A673 (cell line): ENCODE measurements at regions of chr19 and their contacts with region 1.

Region 1: DNA sequence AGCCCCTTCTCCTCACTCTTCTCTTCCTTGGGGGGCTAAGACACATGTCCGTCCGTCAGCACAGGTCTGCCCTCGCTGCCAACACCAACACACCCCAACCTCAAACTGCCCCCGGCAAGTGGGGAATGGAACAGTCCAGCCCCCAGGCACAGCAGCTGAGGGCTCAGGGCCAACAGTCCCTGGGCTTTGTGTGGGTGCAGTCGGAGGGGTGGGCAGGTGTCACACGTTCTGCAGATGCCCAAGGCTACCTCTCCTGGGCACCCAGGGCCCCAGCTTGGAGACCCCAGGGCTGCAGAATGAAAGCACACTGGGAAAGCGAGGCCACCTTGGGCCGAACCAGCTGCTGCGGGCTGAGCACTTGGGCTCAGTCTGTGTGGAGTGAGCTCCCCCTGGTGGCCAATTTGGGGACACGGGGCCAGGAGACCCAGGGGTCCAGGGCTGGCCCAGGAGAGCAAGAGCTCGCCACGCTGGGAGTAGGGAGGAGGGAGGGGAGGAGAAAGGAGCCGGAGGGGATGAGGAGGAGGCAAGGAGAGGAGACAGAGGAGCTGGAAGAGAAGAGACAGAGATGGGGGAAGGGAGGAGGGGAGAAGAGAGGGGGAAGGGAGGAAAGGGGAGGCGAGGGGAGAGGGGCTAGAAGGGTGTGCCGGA is 14.0 kb upstream of the ATP8B3 start:
- DNase-seq: peak; percentile 88
- H3K4me3 ChIP-seq: no peak overlapping the region
- H3K27ac ChIP-seq: no peak overlapping the region
- H3K4me1 ChIP-seq: no peaks in the 10 kb centered on the region
- H3K27me3 ChIP-seq: no peaks in the 10 kb centered on the region
- CTCF ChIP-seq: peak; percentile 98

Region 2: GRCh38 chr19:1300744-1301490 is 525.1 kb before region 1 on chr19:
- CTCF ChIA-PET with region 1: no interaction called
- POLR2A ChIA-PET with region 1: interaction called, 10 read pairs
- intact Hi-C with region 1: no loop called
- DNase-seq: no peak
- H3K4me3 ChIP-seq: no peak overlapping the region
- H3K27ac ChIP-seq: no peak overlapping the region
- H3K4me1 ChIP-seq: no peaks in the 10 kb centered on the region
- H3K27me3 ChIP-seq: no peaks in the 10 kb centered on the region
- CTCF ChIP-seq: no peak

Region 3: DNA sequence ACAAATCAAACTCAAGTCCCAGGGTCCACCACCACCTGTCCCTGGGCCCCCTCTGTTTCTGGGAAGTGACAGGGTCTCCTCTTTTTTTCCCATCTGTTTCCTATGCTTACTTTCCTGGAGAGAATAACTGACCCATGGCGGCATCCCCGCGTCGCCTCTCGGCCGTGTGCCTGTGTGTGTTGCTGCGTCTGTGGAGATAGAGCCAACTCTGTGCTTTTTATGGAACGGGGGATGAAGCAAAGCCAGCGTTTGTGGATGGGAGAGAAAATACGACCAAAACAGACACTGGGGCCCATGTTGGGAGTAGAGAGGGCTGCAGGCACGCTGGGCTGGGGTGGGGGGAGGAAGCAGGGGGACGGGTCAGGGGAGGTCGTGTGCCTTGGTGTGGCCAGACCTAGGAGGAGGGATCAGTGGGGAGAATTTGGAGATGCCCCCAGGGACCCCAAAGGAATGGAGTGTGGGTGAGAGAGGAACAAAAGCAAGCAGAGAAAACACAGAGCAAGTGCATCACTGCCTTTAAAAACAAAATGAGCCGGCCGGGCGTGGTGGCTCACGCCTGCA is 285.6 kb before region 1 on chr19:
- CTCF ChIA-PET with region 1: interaction called, 23 read pairs
- POLR2A ChIA-PET with region 1: no interaction called
- intact Hi-C with region 1: no loop called
- DNase-seq: no peak
- H3K4me3 ChIP-seq: no peak overlapping the region
- H3K27ac ChIP-seq: no peak overlapping the region
- H3K4me1 ChIP-seq: peaks cover 8% of the 10 kb centered on the region
- H3K27me3 ChIP-seq: no peaks in the 10 kb centered on the region
- CTCF ChIP-seq: no peak

Region 4: GRCh38 chr19:1646149-1646548 is 179.9 kb before region 1 on chr19:
- CTCF ChIA-PET with region 1: interaction called, 12 read pairs
- POLR2A ChIA-PET with region 1: no interaction called
- intact Hi-C with region 1: no loop called
- DNase-seq: no peak
- H3K4me3 ChIP-seq: no peak overlapping the region
- H3K27ac ChIP-seq: no peak overlapping the region
- H3K4me1 ChIP-seq: peaks cover 20% of the 10 kb centered on the region
- H3K27me3 ChIP-seq: no peaks in the 10 kb centered on the region
- CTCF ChIP-seq: no peak

Region 5: DNA sequence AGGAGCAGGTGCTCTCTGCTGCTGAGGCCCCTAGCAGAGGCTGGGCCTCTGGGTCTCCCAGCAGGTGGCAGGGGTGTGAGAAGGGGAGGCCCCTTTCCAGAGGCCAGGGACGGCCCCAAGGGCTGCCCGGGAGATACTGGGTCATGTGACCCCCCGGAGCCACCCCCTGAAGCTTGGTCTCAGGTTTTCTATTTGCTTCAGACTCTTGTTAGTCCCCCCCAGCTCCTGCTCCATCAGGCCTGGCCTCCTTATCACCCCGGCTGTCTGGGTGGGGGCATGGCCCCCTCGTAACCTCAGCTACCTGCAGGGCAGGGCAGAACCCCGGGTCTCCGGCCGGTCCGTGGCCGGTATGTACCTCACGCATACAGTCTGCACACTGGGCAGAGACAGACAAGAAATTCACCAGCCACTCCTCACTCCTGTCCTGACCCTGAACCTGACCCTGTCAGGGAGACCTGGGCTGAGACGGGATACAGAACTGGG is 160.4 kb before region 1 on chr19:
- CTCF ChIA-PET with region 1: interaction called, 18 read pairs
- POLR2A ChIA-PET with region 1: no interaction called
- intact Hi-C with region 1: no loop called
- DNase-seq: no peak
- H3K4me3 ChIP-seq: no peak overlapping the region
- H3K27ac ChIP-seq: no peak overlapping the region
- H3K4me1 ChIP-seq: peaks cover 21% of the 10 kb centered on the region
- H3K27me3 ChIP-seq: no peaks in the 10 kb centered on the region
- CTCF ChIP-seq: no peak

Region 6: GRCh38 chr19:2411709-2412108 is 585.7 kb after region 1 on chr19:
- CTCF ChIA-PET with region 1: no interaction called
- POLR2A ChIA-PET with region 1: interaction called, 14 read pairs
- intact Hi-C with region 1: no loop called
- DNase-seq: no peak
- H3K4me3 ChIP-seq: no peak overlapping the region
- H3K27ac ChIP-seq: no peak overlapping the region
- H3K4me1 ChIP-seq: no peaks in the 10 kb centered on the region
- H3K27me3 ChIP-seq: no peaks in the 10 kb centered on the region
- CTCF ChIP-seq: no peak